Activated CD8-positive, alpha-beta T cell treated with anti-CD3 and anti-CD28 coated beads for 36 hours (primary cell): ENCODE measurements at regions of chr11 and their contacts with region 1.

Region 1: GRCh38 chr11:93234602-93235207 is 36.9 kb upstream of the SLC36A4 start:
- DNase-seq: peak; percentile 82
- ATAC-seq: peak; percentile 99
- H3K4me3 Mint-ChIP-seq: no peak overlapping the region
- H3K27ac Mint-ChIP-seq: no peak overlapping the region
- H3K4me1 Mint-ChIP-seq: no peaks in the 10 kb centered on the region
- H3K27me3 Mint-ChIP-seq: peaks cover 20% of the 10 kb centered on the region
- CTCF ChIP-seq: peak; percentile 76

Region 2: GRCh38 chr11:93192163-93192562 is 42.5 kb before region 1 on chr11:
- CTCF ChIA-PET with region 1: no interaction called
- POLR2A ChIA-PET with region 1: no interaction called
- intact Hi-C with region 1: no loop called
- DNase-seq: no peak
- ATAC-seq: no peak
- H3K4me3 Mint-ChIP-seq: no peak overlapping the region
- H3K27ac Mint-ChIP-seq: no peak overlapping the region
- H3K4me1 Mint-ChIP-seq: peaks cover 16% of the 10 kb centered on the region
- H3K27me3 Mint-ChIP-seq: no peaks in the 10 kb centered on the region
- CTCF ChIP-seq: no peak

Region 3: GRCh38 chr11:93543292-93543977 is 308.7 kb after region 1 on chr11 and contains the start of gene SMCO4:
- CTCF ChIA-PET with region 1: interaction called, 16 read pairs
- POLR2A ChIA-PET with region 1: no interaction called
- intact Hi-C with region 1: loop called (anchors 5 kb)
- DNase-seq: peak; percentile 68
- ATAC-seq: peak; percentile 79
- H3K4me3 Mint-ChIP-seq: peak within 1 kb of the TSS; percentile 73
- H3K27ac Mint-ChIP-seq: peak within 1 kb of the TSS; percentile 50
- H3K4me1 Mint-ChIP-seq: peaks cover 13% of the 10 kb centered on the region
- H3K27me3 Mint-ChIP-seq: peaks cover 14% of the 10 kb centered on the region
- CTCF ChIP-seq: peak; percentile 50
- total RNA-seq, gene SMCO4: 5.0 to 9.4 TPM

Region 4: GRCh38 chr11:93652161-93652597 is 417.5 kb after region 1 on chr11:
- CTCF ChIA-PET with region 1: interaction called, 51 read pairs
- POLR2A ChIA-PET with region 1: no interaction called
- intact Hi-C with region 1: loop called (anchors 2 kb)
- DNase-seq: no peak
- ATAC-seq: no peak
- H3K4me3 Mint-ChIP-seq: no peak overlapping the region
- H3K27ac Mint-ChIP-seq: no peak overlapping the region
- H3K4me1 Mint-ChIP-seq: peaks cover 2% of the 10 kb centered on the region
- H3K27me3 Mint-ChIP-seq: no peaks in the 10 kb centered on the region
- CTCF ChIP-seq: peak; percentile 95